PC-9 (cell line): ENCODE measurements at regions of chr4 and their contacts with region 1.

Region 1: GRCh38 chr4:158996669-158997074 is 106.2 kb upstream of the RAPGEF2 start:
- DNase-seq: peak; percentile 41 to 93
- H3K4me3 ChIP-seq: no peak overlapping the region
- H3K27ac ChIP-seq: peak overlapping the region; percentile 78
- H3K4me1 ChIP-seq: peaks cover 25% of the 10 kb centered on the region
- H3K27me3 ChIP-seq: no peaks in the 10 kb centered on the region
- CTCF ChIP-seq: no peak

Region 2: GRCh38 chr4:158856852-158857251 is 139.8 kb before region 1 on chr4:
- CTCF ChIA-PET with region 1: no interaction called
- POLR2A ChIA-PET with region 1: no interaction called
- intact Hi-C with region 1: loop called (anchors 5 kb)
- DNase-seq: peak in 1 of 2 experiments; percentile 52
- H3K4me3 ChIP-seq: no peak overlapping the region
- H3K27ac ChIP-seq: no peak overlapping the region
- H3K4me1 ChIP-seq: no peaks in the 10 kb centered on the region
- H3K27me3 ChIP-seq: no peaks in the 10 kb centered on the region
- CTCF ChIP-seq: peak; percentile 73

Region 3: DNA sequence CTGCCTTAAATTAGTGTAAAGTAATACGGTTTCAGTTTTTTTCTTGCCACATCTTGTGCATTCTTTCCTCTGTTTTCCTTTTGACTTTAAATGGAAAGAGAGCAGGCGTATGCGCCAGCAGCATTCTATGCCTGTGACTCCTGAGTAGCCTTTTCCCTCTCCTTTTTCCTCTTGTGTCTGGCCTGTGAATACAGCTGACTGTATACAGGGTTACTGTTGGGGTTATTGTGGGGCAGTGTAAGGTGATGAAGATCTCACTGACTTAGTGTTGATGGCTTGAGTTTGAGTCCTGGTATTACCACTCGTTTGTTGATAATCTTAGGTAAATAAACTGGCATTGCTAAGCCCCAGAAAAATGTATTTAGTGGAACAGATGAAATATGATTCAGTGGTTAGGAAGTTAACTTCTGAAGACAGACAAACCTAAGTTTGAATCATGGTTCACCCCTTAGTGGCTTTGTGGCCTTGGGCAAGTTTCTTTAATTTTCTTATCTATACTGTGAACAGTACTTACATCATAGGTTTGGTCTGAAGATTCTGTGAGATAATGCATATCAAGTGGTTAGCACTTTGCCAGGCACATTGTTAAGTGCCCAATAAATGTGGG is 122.8 kb before region 1 on chr4:
- CTCF ChIA-PET with region 1: no interaction called
- POLR2A ChIA-PET with region 1: interaction called, 7 read pairs
- intact Hi-C with region 1: loop called (anchors 5 kb)
- DNase-seq: peak; percentile 61 to 98
- H3K4me3 ChIP-seq: peak overlapping the region; percentile 26; the same call in 1 of the 2 replicates
- H3K27ac ChIP-seq: peak overlapping the region; percentile 83
- H3K4me1 ChIP-seq: peaks cover 22% of the 10 kb centered on the region
- H3K27me3 ChIP-seq: no peaks in the 10 kb centered on the region
- CTCF ChIP-seq: no peak

Region 4: GRCh38 chr4:159010563-159011260 is 14.0 kb after region 1 on chr4:
- CTCF ChIA-PET with region 1: interaction called, 4 read pairs
- POLR2A ChIA-PET with region 1: interaction called, 19 read pairs
- intact Hi-C with region 1: no loop called
- DNase-seq: peak; percentile 24 to 64
- H3K4me3 ChIP-seq: no peak overlapping the region
- H3K27ac ChIP-seq: peak overlapping the region; percentile 71
- H3K4me1 ChIP-seq: peaks cover 39% of the 10 kb centered on the region
- H3K27me3 ChIP-seq: no peaks in the 10 kb centered on the region
- CTCF ChIP-seq: no peak

Region 5: DNA sequence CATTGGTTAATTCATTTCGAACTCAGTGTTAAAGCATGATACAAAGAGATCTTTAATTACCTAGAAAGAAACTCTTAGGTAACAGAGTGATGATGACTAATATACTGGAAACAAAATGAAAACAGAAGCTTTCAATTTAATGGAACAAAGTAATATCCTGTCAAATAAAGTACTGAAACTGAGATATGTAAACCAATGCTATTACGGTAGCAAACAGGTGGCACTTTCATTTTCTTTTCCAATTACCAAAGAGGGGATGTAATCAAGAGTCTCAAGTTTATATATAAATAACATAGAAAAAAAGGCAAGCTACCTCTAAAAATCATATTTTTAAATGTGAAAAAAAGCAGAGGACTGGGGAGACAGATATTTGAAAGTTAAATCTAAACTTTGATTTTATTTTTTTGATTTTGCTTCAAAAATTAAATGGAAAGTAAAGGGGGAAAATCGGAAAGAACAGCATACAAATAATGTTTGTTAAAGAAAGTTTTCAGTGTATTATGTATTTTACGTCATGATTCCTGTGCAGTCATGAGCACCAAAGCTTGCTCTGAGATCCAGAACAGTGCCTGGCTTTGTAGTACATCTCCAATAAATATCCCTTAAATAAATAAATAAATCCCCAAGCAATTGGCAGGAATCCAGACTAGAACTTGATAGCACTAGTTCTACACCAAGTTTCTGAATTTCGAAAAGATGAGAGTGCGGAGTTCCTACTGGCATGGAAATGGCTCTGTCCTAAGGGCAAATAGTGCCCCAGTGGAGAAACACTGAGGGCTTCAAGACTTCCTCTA is 81.2 kb after region 1 on chr4:
- CTCF ChIA-PET with region 1: no interaction called
- POLR2A ChIA-PET with region 1: interaction called, 17 read pairs
- intact Hi-C with region 1: no loop called
- DNase-seq: no peak
- H3K4me3 ChIP-seq: no peak overlapping the region
- H3K27ac ChIP-seq: no peak overlapping the region
- H3K4me1 ChIP-seq: no peaks in the 10 kb centered on the region
- H3K27me3 ChIP-seq: no peaks in the 10 kb centered on the region
- CTCF ChIP-seq: no peak

Region 6: GRCh38 chr4:159117968-159118367 is 121.3 kb after region 1 on chr4:
- CTCF ChIA-PET with region 1: no interaction called
- POLR2A ChIA-PET with region 1: no interaction called
- intact Hi-C with region 1: no loop called
- DNase-seq: no peak
- H3K4me3 ChIP-seq: no peak overlapping the region
- H3K27ac ChIP-seq: no peak overlapping the region
- H3K4me1 ChIP-seq: no peaks in the 10 kb centered on the region
- H3K27me3 ChIP-seq: no peaks in the 10 kb centered on the region
- CTCF ChIP-seq: no peak

Region 7: GRCh38 chr4:159160242-159160641 is 163.6 kb after region 1 on chr4:
- CTCF ChIA-PET with region 1: no interaction called
- POLR2A ChIA-PET with region 1: interaction called, 10 read pairs
- intact Hi-C with region 1: no loop called
- DNase-seq: no peak
- H3K4me3 ChIP-seq: no peak overlapping the region
- H3K27ac ChIP-seq: no peak overlapping the region
- H3K4me1 ChIP-seq: no peaks in the 10 kb centered on the region
- H3K27me3 ChIP-seq: no peaks in the 10 kb centered on the region
- CTCF ChIP-seq: no peak